Posterior vena cava (tissue), 2 donors: ENCODE measurements at regions of chr14 and their contacts with region 1.

Region 1: DNA sequence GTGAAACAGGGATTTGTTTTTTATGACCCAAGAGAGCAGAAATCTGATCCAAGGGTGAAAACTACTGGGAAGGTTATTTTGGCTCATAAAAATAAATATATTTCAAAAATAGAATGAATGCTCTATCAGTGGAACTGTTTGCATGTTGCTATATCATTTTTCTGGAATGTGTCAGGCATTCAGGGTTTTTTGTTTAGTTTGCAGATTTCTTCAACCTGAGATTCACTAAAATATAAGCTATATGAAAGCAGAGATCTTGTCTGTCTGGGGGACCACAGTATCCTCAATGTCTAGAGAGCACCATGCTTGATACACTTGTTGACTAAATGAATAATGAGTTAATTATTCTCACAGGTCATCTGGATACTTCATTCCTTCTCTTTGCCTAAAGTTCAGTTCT is 165.1 kb downstream of the NUBPL start:
- DNase-seq: no peak

Region 2: GRCh38 chr14:31677630-31678236 is 48.6 kb before region 1 on chr14:
- intact Hi-C with region 1: loop called in 1 of 2 experiments (anchors 2 kb)
- DNase-seq: no peak

Region 3: GRCh38 chr14:32087173-32087861 is 361.0 kb after region 1 on chr14:
- intact Hi-C with region 1: no loop called
- DNase-seq: no peak